MCF 10A (cell line): ENCODE measurements at regions of chr9 and their contacts with region 1.

Region 1: GRCh38 chr9:120916588-120916987 is 10.0 kb downstream of the TRAF1 start:
- DNase-seq: peak; percentile 68
- H3K4me3 Mint-ChIP-seq: no peak overlapping the region
- H3K27ac Mint-ChIP-seq: peak overlapping the region; percentile 47
- H3K4me1 Mint-ChIP-seq: peaks cover 33% of the 10 kb centered on the region
- H3K27me3 Mint-ChIP-seq: no peaks in the 10 kb centered on the region
- CTCF ChIP-seq: peak; percentile 22

Region 2: GRCh38 chr9:120942186-120943001 is 25.8 kb after region 1 on chr9:
- CTCF ChIA-PET with region 1: interaction called, 71 read pairs
- POLR2A ChIA-PET with region 1: interaction called, 32 read pairs
- intact Hi-C with region 1: no loop called
- DNase-seq: peak; percentile 31
- H3K4me3 Mint-ChIP-seq: no peak overlapping the region
- H3K27ac Mint-ChIP-seq: peak overlapping the region; percentile 58
- H3K4me1 Mint-ChIP-seq: peaks cover 27% of the 10 kb centered on the region
- H3K27me3 Mint-ChIP-seq: no peaks in the 10 kb centered on the region
- CTCF ChIP-seq: no peak